Psoas muscle (tissue), 8 donors: ENCODE measurements at regions of chr16 and their contacts with region 1.

Region 1: GRCh38 chr16:56600398-56600999 is 7.9 kb upstream of the MT2A start:
- DNase-seq: peak in 1 of 2 donors; percentile 28
- ATAC-seq: peak in 3 of 4 donors; percentile 26 to 34 (median 29)
- H3K4me3 ChIP-seq: no peak overlapping the region
- H3K27ac ChIP-seq: no peak overlapping the region
- H3K4me1 ChIP-seq: peaks cover 14% of the 10 kb centered on the region
- H3K27me3 ChIP-seq: no peaks in the 10 kb centered on the region
- CTCF ChIP-seq: peak; percentile 51

Region 2: DNA sequence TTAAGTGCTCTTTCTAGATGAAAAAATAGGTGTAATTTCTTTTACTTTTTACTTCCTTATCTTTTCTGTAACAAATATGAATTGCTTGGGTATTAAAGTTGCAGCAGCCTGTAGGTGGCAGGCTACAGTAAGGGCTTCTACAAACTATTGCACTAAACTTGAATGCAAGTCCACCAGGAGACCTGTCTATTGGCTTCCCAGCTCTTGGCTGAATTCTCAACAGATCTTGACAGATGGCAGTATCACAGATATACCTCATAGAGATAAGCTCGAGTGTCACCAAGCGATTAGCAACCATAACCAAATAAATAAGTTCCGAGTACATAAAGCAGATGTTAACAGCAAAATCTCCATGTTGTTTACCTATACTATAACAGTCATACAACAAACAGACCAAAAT is 86.5 kb before region 1 on chr16:
- intact Hi-C with region 1: loop called (anchors 5 kb)
- DNase-seq: no peak
- ATAC-seq: peak; percentile 47 to 66 (median 64)
- H3K4me3 ChIP-seq: no peak overlapping the region
- H3K27ac ChIP-seq: no peak overlapping the region
- H3K4me1 ChIP-seq: peaks cover 32% of the 10 kb centered on the region
- H3K27me3 ChIP-seq: no peaks in the 10 kb centered on the region
- CTCF ChIP-seq: peak; percentile 77

Region 3: DNA sequence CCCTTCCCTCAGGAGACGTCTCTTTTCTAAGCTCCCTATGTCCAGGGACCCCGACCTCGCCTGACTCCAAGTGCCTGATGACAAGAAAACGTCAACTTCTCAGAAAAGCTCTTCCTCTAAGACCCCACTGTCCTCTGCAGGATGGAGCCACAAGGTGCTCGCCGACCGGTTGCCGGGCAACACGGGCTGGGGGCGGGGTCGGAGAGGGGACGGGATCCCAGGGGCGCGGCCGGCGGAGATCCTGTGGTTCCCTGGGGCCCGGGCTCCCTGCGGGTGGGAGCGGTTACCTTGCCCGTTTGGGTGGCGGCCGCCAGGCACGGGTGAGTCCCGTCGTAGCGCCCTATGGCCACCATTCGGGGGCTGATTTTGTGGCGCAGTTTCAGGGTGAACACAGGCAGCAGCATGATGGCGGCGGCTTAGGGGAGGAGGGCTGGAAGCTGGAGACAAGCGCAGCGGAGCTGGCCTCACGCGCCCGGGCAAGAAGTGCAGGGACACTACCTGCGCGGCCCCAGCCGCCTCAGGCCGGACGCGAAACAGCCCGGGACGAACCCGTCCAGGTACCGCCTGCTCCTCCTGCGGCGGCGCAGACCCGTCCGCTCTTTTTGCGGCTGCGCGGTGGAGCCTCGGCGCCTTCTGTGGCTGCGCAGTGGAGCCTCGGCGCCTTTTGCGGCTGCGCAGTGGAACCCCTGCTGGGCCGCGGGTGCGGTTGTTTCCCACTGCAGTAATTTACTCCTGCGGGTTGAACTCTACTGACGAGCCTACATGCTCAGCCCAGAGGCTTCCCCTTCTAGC is 80.8 kb before region 1 on chr16 and contains the start of gene BBS2:
- intact Hi-C with region 1: loop called (anchors 5 kb)
- DNase-seq: peak; percentile 93 to 95
- ATAC-seq: peak; percentile 93 to 96 (median 94)
- H3K4me3 ChIP-seq: peak within 1 kb of the TSS; percentile 98
- H3K27ac ChIP-seq: peak within 1 kb of the TSS; percentile 87
- H3K4me1 ChIP-seq: peaks cover 22% of the 10 kb centered on the region
- H3K27me3 ChIP-seq: no peaks in the 10 kb centered on the region
- CTCF ChIP-seq: no peak
- total RNA-seq, gene BBS2: 29.1 to 70.6 (median 39.9) TPM

Region 4: GRCh38 chr16:56611281-56611833 is 10.9 kb after region 1 on chr16:
- intact Hi-C with region 1: no loop called
- DNase-seq: peak; percentile 84 to 89
- ATAC-seq: peak; percentile 57 to 62 (median 60)
- H3K4me3 ChIP-seq: peak overlapping the region; percentile 89
- H3K27ac ChIP-seq: peak overlapping the region; percentile 99
- H3K4me1 ChIP-seq: peaks cover 43% of the 10 kb centered on the region
- H3K27me3 ChIP-seq: no peaks in the 10 kb centered on the region
- CTCF ChIP-seq: no peak

Region 5: DNA sequence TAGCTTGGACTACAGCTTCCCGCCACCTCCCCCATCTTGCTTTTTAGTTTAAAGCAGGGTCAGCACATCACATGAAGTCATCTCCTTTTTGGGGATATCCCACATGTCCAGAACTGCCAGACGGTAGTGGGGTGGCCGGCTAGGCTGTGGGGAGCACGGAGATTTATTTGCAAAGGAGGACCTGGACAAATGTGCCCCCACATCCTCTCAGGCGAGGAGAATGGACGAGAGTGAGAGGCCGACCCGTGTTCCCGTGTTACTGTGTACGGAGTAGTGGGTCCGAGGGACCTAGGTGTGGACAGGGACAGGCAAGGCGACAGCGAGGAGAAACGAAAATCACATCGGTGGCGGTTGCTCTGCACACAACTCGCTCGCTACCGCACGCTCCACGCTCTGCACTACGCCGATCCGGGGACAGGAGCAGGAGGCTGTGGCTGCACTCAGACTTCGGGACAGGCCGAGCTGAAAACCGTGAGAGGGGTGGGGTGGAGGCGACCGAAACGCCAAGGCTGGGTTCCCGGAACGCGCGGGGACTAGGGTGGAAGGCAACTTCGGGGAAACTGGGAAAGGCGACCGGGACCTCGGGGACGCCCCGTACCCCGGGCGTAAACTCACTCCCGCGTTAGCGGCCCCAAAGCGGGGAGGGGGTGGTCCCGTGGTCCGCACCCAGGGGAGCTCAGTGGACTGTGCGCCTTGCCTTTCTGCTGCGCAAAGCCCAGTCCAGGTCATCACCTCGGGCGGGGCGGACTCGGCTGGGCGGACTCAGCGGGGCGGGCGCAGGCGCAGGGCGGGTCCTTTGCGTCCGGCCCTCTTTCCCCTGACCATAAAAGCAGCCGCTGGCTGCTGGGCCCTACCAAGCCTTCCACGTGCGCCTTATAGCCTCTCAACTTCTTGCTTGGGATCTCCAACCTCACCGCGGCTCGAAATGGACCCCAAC is 37.6 kb after region 1 on chr16 and contains the start of gene MT1A:
- intact Hi-C with region 1: loop called (anchors 5 kb)
- DNase-seq: peak; percentile 87 to 89
- ATAC-seq: peak; percentile 87 to 91 (median 88)
- H3K4me3 ChIP-seq: peak within 1 kb of the TSS; percentile 69
- H3K27ac ChIP-seq: peak within 1 kb of the TSS; percentile 65
- H3K4me1 ChIP-seq: peaks cover 5% of the 10 kb centered on the region
- H3K27me3 ChIP-seq: peaks cover 0 to 2% (median 0%) of the 10 kb centered on the region in 3 donors
- CTCF ChIP-seq: no peak
- total RNA-seq, gene MT1A: 4.0 to 1,028 (median 22.4) TPM

Region 6: DNA sequence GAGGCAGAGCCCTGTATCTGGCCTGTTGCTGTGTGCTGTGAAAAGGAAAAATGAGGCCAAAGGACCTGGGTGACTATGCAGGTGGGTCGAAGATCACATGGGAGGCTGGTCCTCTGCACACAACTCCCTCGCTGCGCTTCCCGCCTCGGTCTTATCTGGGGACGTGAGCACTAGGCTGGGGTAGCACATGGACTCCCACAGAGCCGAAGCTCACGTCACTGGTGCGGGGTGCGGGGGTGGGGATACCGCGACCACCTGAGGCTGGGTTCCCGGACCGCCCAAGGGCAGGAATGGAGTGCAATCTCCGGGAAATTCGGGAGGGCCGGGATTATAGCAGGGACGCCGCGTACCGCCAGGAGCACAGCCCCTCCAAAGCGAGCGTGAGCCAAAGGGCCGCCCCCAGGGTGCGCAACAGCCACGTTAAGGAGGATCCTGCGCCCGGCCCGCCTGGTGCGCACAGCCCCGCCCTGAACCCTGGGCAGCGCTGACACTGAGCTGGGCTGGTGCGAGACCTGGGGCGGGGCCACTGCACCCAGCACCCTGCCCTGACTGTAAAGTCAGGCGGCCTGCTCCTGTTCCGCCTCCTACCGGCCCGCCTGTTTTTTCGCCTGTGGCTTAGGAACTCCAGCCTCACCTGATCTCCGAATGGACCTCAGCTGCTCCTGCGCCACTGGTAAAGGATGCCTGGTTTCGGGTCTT is 42.7 kb after region 1 on chr16:
- intact Hi-C with region 1: loop called (anchors 5 kb)
- DNase-seq: peak; percentile 80 to 83
- ATAC-seq: peak; percentile 83 to 86 (median 84)
- H3K4me3 ChIP-seq: peak overlapping the region; percentile 52
- H3K27ac ChIP-seq: no peak overlapping the region
- H3K4me1 ChIP-seq: peaks cover 10% of the 10 kb centered on the region
- H3K27me3 ChIP-seq: peaks cover 0 to 5% (median 0%) of the 10 kb centered on the region in 3 donors
- CTCF ChIP-seq: peak; percentile 36

Region 7: GRCh38 chr16:56657555-56658326 is 57.2 kb after region 1 on chr16 and contains the start of gene MT1F:
- intact Hi-C with region 1: no loop called
- DNase-seq: peak; percentile 79
- ATAC-seq: peak; percentile 76 to 91 (median 86)
- H3K4me3 ChIP-seq: peak within 1 kb of the TSS; percentile 68
- H3K27ac ChIP-seq: no peak within 1 kb of the TSS
- H3K4me1 ChIP-seq: no peaks in the 10 kb centered on the region
- H3K27me3 ChIP-seq: peaks cover 0 to 13% (median under 1%) of the 10 kb centered on the region in 3 donors
- CTCF ChIP-seq: no peak
- total RNA-seq, gene MT1F: 0.73 to 1.3 (median 1.2) TPM in 3 of 4 donors, not detected in the other

Region 8: GRCh38 chr16:56673921-56674320 is 73.4 kb after region 1 on chr16:
- intact Hi-C with region 1: loop called in 1 of 2 experiments (anchors 2 kb)
- DNase-seq: peak in 1 of 2 donors; percentile 72
- ATAC-seq: peak; percentile 58 to 91 (median 79)
- H3K4me3 ChIP-seq: no peak overlapping the region
- H3K27ac ChIP-seq: no peak overlapping the region
- H3K4me1 ChIP-seq: peaks cover under 1% of the 10 kb centered on the region
- H3K27me3 ChIP-seq: peaks cover 0 to 26% (median 4%) of the 10 kb centered on the region in 3 donors
- CTCF ChIP-seq: peak; percentile 71

Region 9: DNA sequence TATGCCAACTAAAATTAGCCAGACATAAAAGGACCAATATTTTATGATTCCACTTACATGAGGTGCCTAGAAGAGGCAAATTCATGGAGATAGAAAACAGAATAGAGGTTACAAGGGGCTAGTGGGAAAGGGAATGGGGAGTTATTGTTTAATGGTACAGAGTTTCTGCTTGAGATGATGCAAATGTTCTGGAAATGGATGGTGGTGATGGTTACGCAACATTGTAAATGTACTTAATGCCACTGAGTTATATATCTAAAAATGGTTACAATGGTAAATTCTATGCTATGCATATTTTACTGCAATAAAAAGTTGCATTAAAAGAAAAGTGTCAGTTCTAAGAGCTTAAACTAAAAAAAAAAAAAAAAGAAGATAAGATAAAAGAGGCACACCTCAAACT is 99.7 kb after region 1 on chr16:
- intact Hi-C with region 1: loop called (anchors 1 to 5 kb)
- DNase-seq: no peak
- ATAC-seq: no peak
- H3K4me3 ChIP-seq: no peak overlapping the region
- H3K27ac ChIP-seq: no peak overlapping the region
- H3K4me1 ChIP-seq: no peaks in the 10 kb centered on the region
- H3K27me3 ChIP-seq: no peaks in the 10 kb centered on the region
- CTCF ChIP-seq: no peak